ENCODE measurements at regions of chr1 and their contacts with region 1.

Region 1: GRCh38 chr1:6889875-6890480 is 104.7 kb downstream of the CAMTA1 start:
- DNase-seq: peak; percentile 80
- H3K4me3 Mint-ChIP-seq: no peak overlapping the region
- H3K27ac Mint-ChIP-seq: no peak overlapping the region
- H3K4me1 Mint-ChIP-seq: no peaks in the 10 kb centered on the region
- H3K27me3 Mint-ChIP-seq: no peaks in the 10 kb centered on the region

Region 2: GRCh38 chr1:6727535-6727934 is 162.4 kb before region 1 on chr1:
- intact Hi-C with region 1: loop called (anchors 2 kb)
- DNase-seq: peak; percentile 87
- H3K4me3 Mint-ChIP-seq: no peak overlapping the region
- H3K27ac Mint-ChIP-seq: no peak overlapping the region
- H3K4me1 Mint-ChIP-seq: peaks cover 3% of the 10 kb centered on the region
- H3K27me3 Mint-ChIP-seq: peaks cover 3% of the 10 kb centered on the region

Region 3: DNA sequence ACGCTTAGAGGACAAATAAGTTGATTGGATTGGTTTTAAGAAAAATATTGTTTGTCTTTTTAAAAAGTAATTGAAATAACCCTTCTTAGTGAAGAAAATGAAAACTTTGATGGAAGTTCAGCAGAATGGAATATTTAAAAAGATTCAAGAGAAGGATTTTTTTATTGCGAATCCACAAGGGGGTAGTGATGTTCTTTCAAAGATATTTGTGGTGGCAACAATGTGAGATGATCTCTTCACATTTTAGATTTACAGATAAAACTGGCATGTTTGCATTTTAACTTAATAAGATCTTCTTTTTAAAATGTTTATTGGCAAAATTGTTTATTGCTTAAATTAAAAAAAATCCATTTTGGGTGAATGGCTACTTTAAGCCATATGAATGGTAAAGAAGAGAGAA is 95.8 kb before region 1 on chr1:
- intact Hi-C with region 1: loop called (anchors 10 kb)
- DNase-seq: no peak
- H3K4me3 Mint-ChIP-seq: no peak overlapping the region
- H3K27ac Mint-ChIP-seq: no peak overlapping the region
- H3K4me1 Mint-ChIP-seq: peaks cover 6% of the 10 kb centered on the region
- H3K27me3 Mint-ChIP-seq: no peaks in the 10 kb centered on the region

Region 4: GRCh38 chr1:7149080-7149838 is 259.3 kb after region 1 on chr1:
- intact Hi-C with region 1: no loop called
- DNase-seq: no peak
- H3K4me3 Mint-ChIP-seq: no peak overlapping the region
- H3K27ac Mint-ChIP-seq: no peak overlapping the region
- H3K4me1 Mint-ChIP-seq: no peaks in the 10 kb centered on the region
- H3K27me3 Mint-ChIP-seq: no peaks in the 10 kb centered on the region

Region 5: GRCh38 chr1:7302873-7303272 is 412.9 kb after region 1 on chr1:
- intact Hi-C with region 1: no loop called
- DNase-seq: peak; percentile 17
- H3K4me3 Mint-ChIP-seq: no peak overlapping the region
- H3K27ac Mint-ChIP-seq: no peak overlapping the region
- H3K4me1 Mint-ChIP-seq: no peaks in the 10 kb centered on the region
- H3K27me3 Mint-ChIP-seq: peaks cover 6% of the 10 kb centered on the region

Measured in activated CD4-positive, alpha-beta T cell treated with anti-CD3 and anti-CD28 coated beads, Interleukin-2, amount 10 ng/mL, durations not matched to agents 24 days and 14 days (primary cell).